ENCODE measurements at regions of chr2 and their contacts with region 1.

Region 1: GRCh38 chr2:117997872-117998454 is 15.9 kb downstream of the CCDC93 start:
- H3K4me3 Mint-ChIP-seq: no peak overlapping the region
- H3K27ac Mint-ChIP-seq: no peak overlapping the region
- H3K4me1 Mint-ChIP-seq: no peaks in the 10 kb centered on the region
- H3K27me3 Mint-ChIP-seq: no peaks in the 10 kb centered on the region

Region 2: DNA sequence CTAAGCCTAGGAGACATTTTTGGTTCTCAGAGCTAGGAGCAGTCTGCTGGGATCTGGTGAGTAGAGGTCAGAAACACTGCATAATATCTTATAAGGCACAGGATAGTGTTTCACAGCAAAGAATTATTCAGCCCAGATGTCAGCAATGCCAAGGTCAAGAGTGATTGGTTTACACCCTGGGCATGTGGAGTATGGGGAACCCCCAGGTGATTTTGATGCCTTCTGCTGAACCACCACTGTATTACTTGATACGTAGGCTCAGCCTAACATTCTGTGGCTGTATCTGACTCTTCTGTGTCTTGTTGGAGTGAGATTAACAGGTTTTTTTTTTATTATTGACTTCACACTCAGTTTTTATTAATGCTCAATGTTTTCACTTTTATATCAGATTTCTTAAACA is 177.5 kb before region 1 on chr2:
- intact Hi-C with region 1: loop called (anchors 5 kb)
- H3K4me3 Mint-ChIP-seq: no peak overlapping the region
- H3K27ac Mint-ChIP-seq: no peak overlapping the region
- H3K4me1 Mint-ChIP-seq: peaks cover 10% of the 10 kb centered on the region
- H3K27me3 Mint-ChIP-seq: no peaks in the 10 kb centered on the region

Region 3: GRCh38 chr2:117960231-117960630 is 37.7 kb before region 1 on chr2:
- intact Hi-C with region 1: loop called (anchors 5 kb)
- H3K4me3 Mint-ChIP-seq: no peak overlapping the region
- H3K27ac Mint-ChIP-seq: no peak overlapping the region
- H3K4me1 Mint-ChIP-seq: peaks cover 12% of the 10 kb centered on the region
- H3K27me3 Mint-ChIP-seq: no peaks in the 10 kb centered on the region

Measured in dendritic cell treated with granulocyte-macrophage colony-stimulating factor and Interleukin-4, amounts not matched to agents 40 ng/mL and 50 ng/mL, for 4 days (primary cell).